Activated naive CD4-positive, alpha-beta T cell treated with anti-CD3 and anti-CD28 coated beads for 36 hours (primary cell): ENCODE measurements at regions of chr11 and their contacts with region 1.

Region 1: GRCh38 chr11:95283653-95284052 is 52.7 kb upstream of the SESN3 start:
- DNase-seq: no peak
- H3K4me3 Mint-ChIP-seq: no peak overlapping the region
- H3K27ac Mint-ChIP-seq: no peak overlapping the region
- H3K4me1 Mint-ChIP-seq: peaks cover 19% of the 10 kb centered on the region
- H3K27me3 Mint-ChIP-seq: no peaks in the 10 kb centered on the region

Region 2: DNA sequence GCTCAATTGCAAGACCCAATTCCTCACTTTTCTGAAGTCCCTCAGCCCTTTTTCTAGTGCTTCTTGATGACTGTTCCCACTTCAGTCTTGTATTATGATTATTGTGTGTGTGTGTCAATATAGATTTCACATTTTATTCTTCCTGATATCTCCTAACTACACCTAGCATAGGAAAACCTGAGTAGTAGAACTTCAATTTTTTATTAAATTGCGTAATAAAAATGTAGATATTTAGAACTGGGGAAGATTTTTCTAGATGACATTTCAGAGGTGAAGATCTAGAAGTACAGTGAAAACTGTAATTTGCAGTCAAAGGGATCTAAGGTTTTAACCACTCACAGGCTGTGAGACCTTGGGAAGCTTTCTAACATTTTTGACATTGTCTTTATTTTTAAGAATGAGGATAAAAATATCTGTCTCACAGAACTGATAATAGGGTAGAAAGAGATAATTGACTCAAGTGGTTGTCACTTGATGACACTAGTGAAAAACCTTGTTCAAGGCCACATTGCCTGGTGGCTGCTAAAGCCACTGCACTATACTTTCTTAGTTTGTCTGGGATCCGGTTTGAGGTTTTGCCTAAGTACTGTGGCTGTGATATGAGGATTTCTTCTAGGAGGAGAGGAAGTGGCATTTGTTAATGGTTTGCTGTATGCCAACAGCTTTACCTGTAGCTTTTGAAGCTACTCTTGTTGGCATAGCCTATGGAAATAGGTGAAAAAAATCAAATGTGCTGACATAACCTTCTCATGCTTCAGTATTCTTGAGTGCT is 20.5 kb before region 1 on chr11:
- CTCF ChIA-PET with region 1: no interaction called
- intact Hi-C with region 1: loop called (anchors 2 kb)
- DNase-seq: no peak
- H3K4me3 Mint-ChIP-seq: no peak overlapping the region
- H3K27ac Mint-ChIP-seq: no peak overlapping the region
- H3K4me1 Mint-ChIP-seq: peaks cover 10% of the 10 kb centered on the region
- H3K27me3 Mint-ChIP-seq: no peaks in the 10 kb centered on the region